GM18951 (cell line): ENCODE measurements at regions of chr14 and their contacts with region 1.

Region 1: GRCh38 chr14:69673578-69674305 is 62.3 kb downstream of the SUSD6 start:
- POLR2A ChIP-seq: peak; percentile 34

Region 2: GRCh38 chr14:69615496-69616407 is 58.0 kb before region 1 on chr14:
- in situ Hi-C with region 1: loop called (anchors 5 kb)
- POLR2A ChIP-seq: peak; percentile 43